ENCODE measurements at regions of chr6 and their contacts with region 1.

Region 1: DNA sequence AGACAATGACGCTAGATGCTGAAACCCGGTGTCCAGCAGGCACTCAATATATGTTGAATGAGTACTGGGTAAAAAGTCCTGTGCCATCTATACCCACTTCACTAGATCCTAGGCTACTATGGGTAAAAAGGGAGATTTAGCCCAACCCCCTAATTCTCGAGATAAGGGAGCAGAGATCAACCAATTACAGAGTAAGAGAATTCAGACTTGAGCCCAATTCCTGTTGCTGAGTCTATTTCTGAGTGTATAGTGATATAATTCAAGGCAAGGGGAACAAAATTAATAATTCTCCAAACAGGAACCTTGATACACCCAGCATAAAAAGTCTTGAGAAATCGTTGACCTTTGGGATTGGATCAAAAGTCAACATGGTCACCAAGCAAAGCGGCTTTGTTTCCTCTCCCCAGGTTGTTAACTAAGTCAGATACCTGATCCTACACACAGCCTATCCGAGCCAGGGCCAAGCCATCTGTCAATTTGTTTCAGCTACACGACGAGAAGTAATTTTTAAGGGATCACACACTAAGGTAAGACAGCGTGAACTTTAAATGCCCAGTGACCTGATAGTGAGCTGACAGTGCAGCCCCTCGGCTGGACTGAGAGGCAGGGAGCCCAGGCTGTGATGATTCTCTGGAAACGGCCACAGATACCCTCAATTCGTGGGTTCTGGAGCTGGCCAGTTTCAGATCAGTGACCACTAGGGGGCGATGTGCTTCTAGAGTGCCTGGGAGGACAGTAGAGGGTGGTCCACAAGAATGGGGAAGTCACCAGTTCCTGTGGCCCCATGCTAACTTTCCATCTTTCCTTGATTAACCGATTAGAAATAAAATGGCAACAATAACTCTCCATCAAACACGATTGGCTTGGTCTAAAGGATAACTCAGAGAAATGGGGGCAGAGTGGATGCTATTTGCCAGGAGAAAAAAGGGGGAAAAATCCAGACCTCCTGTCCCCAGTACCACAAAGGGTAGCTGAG is 46.2 kb downstream of the SLC22A23 start:
- DNase-seq: peak; percentile 78
- H3K4me3 ChIP-seq: peak overlapping the region; percentile 20
- H3K4me3 Mint-ChIP-seq: peak overlapping the region; percentile 47
- H3K27ac Mint-ChIP-seq: peak overlapping the region; percentile 86
- H3K4me1 ChIP-seq: peaks cover 88% of the 10 kb centered on the region
- H3K4me1 Mint-ChIP-seq: peaks cover 62% of the 10 kb centered on the region
- H3K27me3 ChIP-seq: no peaks in the 10 kb centered on the region
- H3K27me3 Mint-ChIP-seq: no peaks in the 10 kb centered on the region
- CTCF ChIP-seq: peak; percentile 77 to 79

Region 2: GRCh38 chr6:3442431-3443220 is 32.0 kb after region 1 on chr6:
- CTCF ChIA-PET with region 1: interaction called, 6 read pairs
- POLR2A ChIA-PET with region 1: interaction called, 5 read pairs
- intact Hi-C with region 1: loop called (anchors 1 kb)
- DNase-seq: peak in 1 of 2 experiments; percentile 39
- H3K4me3 ChIP-seq: no peak overlapping the region
- H3K4me3 Mint-ChIP-seq: peak overlapping the region; percentile 41
- H3K27ac Mint-ChIP-seq: peak overlapping the region; percentile 72
- H3K4me1 ChIP-seq: peaks cover 75% of the 10 kb centered on the region
- H3K4me1 Mint-ChIP-seq: peaks cover 48% of the 10 kb centered on the region
- H3K27me3 ChIP-seq: no peaks in the 10 kb centered on the region
- H3K27me3 Mint-ChIP-seq: no peaks in the 10 kb centered on the region
- CTCF ChIP-seq: no peak

Region 3: DNA sequence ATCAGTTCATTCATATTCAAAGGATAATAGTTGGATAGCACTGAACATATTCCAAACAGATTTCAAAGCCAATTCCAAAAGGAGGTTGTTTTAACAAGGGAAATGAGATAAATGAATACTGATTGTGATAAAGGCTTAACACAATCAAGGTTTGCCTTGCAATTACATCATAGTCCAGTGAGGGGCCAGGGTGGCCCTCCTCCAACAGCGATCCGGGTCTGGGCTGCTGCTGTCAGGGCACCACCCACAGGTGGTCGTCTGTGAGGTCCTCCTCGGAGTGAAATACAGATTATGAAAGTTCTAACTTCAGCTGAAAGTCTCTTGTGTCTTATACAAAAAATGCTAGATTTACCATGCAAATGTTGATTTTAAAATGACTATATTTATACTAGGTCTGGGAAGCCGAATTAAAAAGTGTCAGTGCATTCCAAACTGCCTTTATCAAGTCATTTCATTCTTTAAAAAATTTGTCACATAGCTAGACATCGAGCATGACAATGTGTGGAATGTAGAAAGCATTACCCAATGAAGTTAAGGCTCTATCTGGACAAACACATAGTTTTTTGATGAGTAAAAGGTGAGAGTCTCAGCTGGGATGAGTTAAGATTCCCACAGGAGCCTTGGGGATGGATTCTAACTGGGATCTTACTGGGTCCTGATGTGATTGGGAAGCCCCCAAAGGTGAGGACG is 112.0 kb after region 1 on chr6:
- CTCF ChIA-PET with region 1: interaction called, 3 read pairs
- POLR2A ChIA-PET with region 1: interaction called, 7 read pairs
- intact Hi-C with region 1: loop called (anchors 5 kb)
- DNase-seq: peak; percentile 48 to 50
- H3K4me3 ChIP-seq: no peak overlapping the region
- H3K4me3 Mint-ChIP-seq: peak overlapping the region; percentile 23
- H3K27ac Mint-ChIP-seq: peak overlapping the region; percentile 88
- H3K4me1 ChIP-seq: peaks cover 83% of the 10 kb centered on the region
- H3K4me1 Mint-ChIP-seq: peaks cover 37% of the 10 kb centered on the region
- H3K27me3 ChIP-seq: no peaks in the 10 kb centered on the region
- H3K27me3 Mint-ChIP-seq: no peaks in the 10 kb centered on the region
- CTCF ChIP-seq: no peak

Measured in Caco-2 (cell line).